Heart left ventricle (tissue), 16 donors: ENCODE measurements at regions of chr1 and their contacts with region 1.

Region 1: DNA sequence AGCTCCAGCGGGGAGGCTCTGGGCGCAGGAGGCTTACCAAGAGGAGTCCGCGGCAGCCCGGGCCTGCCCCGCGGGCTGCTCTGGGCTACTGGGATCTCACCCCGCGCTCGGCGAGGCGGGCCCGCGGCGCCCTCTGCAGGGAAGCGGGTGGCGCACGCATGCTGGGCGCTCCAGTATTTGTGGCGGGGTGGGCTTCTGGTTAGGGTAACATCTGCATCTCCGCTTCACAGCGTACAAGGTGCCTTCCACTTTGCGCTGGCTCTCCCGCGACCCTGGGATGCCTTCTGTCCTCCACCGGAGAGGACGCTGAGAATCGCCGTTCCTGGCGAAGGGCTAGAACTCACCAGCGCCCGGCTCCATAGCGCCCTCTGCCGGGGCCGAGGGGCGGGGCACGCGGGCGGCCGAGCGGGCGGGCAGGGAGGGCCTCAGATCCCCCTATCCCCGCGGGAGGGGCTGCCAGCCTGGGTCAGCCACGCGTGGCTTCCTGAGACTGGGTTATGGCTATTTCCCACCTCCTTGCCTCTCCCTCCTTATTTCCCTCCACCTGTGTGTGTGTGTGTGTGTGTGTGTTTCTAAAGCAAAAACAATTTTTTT is 46.6 kb upstream of the CTBS start:
- DNase-seq: peak; percentile 69 to 90 (median 75)
- ATAC-seq: peak; percentile 75 to 96 (median 92)
- H3K4me3 ChIP-seq: peak overlapping the region; percentile 30 to 78 (median 62)
- H3K27ac ChIP-seq: peak overlapping the region in 8 of 12 donors; percentile 10 to 70 (median 47)
- H3K4me1 ChIP-seq: peaks cover 0 to 22% (median 8%) of the 10 kb centered on the region in 12 donors
- H3K27me3 ChIP-seq: no peaks in the 10 kb centered on the region
- CTCF ChIP-seq: peak in 11 of 12 donors; percentile 92 to 100 (median 97)
- POLR2A ChIP-seq: no peak

Region 2: DNA sequence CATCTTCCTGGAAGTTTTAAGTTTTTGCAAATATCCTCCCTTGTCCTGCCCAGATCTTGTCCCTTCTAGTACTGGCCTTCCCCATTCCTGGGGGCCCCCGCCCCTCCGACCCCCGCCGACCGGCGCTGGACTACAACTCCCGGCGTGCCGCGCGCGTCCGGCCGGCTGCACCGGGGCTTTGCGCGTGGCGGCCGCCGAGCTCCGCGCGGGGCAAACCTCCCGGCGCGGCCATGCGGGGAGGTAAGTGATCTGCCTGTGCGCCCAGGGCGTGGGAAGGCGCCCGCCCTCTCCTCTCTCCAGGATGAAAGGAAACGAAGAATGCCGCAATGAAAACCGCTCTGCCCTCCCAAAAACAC is 322.5 kb before region 1 on chr1:
- intact Hi-C with region 1: no loop called
- DNase-seq: peak; percentile 61 to 83 (median 66)
- ATAC-seq: peak; percentile 72 to 91 (median 82)
- H3K4me3 ChIP-seq: peak overlapping the region; percentile 69 to 93 (median 82)
- H3K27ac ChIP-seq: peak overlapping the region; percentile 78 to 92 (median 86)
- H3K4me1 ChIP-seq: peaks cover 0 to 42% (median 27%) of the 10 kb centered on the region in 12 donors
- H3K27me3 ChIP-seq: no peaks in the 10 kb centered on the region
- CTCF ChIP-seq: no peak
- POLR2A ChIP-seq: peak in 1 of 2 donors; percentile 59

Region 3: DNA sequence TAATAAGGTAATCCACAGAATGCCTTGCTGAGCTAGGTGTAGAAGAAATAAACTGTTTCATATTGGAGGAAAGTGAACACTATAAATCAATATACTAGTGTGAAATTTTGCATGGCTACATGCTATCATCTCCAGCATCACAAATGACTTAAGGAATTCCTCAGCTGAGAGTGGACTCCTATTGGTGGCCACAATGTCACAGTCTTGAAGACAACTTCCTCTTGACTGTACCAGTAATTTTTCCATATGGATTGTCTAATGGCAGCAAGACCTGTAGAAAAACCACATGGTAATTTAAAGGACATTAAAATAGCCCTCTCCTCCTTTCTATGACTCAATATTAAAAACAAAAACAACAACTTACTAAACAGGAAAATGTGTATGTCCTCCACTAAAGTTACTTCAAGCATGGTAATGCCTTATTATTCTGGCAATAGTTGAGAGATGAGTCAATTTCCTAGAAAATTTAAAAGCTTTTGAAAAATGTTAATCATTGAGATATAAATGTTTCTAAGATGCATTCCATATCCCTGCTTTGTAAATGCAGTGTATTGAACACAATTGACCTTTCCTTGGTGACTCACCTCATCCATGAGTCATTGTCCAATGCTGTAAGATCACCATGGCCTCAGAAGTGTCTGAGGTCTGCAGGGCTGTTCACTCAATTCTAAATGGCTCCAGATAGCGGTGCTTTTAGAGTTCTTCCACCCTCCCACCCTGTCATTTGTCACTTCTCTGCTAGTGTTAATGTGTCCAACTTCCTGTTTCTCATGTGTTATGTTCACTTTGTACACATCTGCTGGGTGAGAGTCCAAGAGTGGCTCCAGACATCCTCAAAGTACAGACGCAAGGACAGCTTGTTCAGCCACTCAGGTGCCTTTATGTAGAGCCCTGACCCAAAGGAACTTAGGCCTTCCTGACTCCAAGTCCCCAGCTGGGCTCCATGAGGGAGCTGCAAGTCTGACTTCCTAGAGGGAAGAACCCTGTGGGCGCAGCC is 255.3 kb before region 1 on chr1:
- intact Hi-C with region 1: no loop called
- DNase-seq: no peak
- ATAC-seq: peak in 2 of 4 donors; percentile 72 to 90
- H3K4me3 ChIP-seq: no peak overlapping the region
- H3K27ac ChIP-seq: peak overlapping the region in 2 of 12 donors; percentile 18 to 49
- H3K4me1 ChIP-seq: peaks cover 0 to 12% (median 0%) of the 10 kb centered on the region in 12 donors
- H3K27me3 ChIP-seq: no peaks in the 10 kb centered on the region
- CTCF ChIP-seq: no peak
- POLR2A ChIP-seq: no peak

Region 4: GRCh38 chr1:84442256-84442655 is 178.6 kb before region 1 on chr1:
- intact Hi-C with region 1: loop called in 4 of 10 experiments (anchors 5 to 10 kb)
- DNase-seq: no peak
- ATAC-seq: peak; percentile 51 to 78 (median 74)
- H3K4me3 ChIP-seq: no peak overlapping the region
- H3K27ac ChIP-seq: peak overlapping the region in 1 of 12 donors; percentile 44
- H3K4me1 ChIP-seq: peaks cover 0 to 22% (median 0%) of the 10 kb centered on the region in 12 donors
- H3K27me3 ChIP-seq: peaks cover 0 to 12% (median 0%) of the 10 kb centered on the region in 9 donors
- CTCF ChIP-seq: peak; percentile 7 to 61 (median 46)
- POLR2A ChIP-seq: no peak

Region 5: GRCh38 chr1:84541679-84542078 is 79.1 kb before region 1 on chr1:
- intact Hi-C with region 1: no loop called
- DNase-seq: no peak
- ATAC-seq: no peak
- H3K4me3 ChIP-seq: no peak overlapping the region
- H3K27ac ChIP-seq: no peak overlapping the region
- H3K4me1 ChIP-seq: no peaks in the 10 kb centered on the region
- H3K27me3 ChIP-seq: no peaks in the 10 kb centered on the region
- CTCF ChIP-seq: peak in 6 of 12 donors; percentile 14 to 37 (median 28)
- POLR2A ChIP-seq: no peak

Region 6: GRCh38 chr1:84573967-84574842 is 46.6 kb before region 1 on chr1 and contains the start of gene CTBS:
- intact Hi-C with region 1: loop called in 2 of 10 experiments (anchors 2 to 5 kb)
- DNase-seq: peak; percentile 91 to 95 (median 92)
- ATAC-seq: peak; percentile 95 to 99 (median 98)
- H3K4me3 ChIP-seq: peak within 1 kb of the TSS; percentile 60 to 92 (median 76)
- H3K27ac ChIP-seq: peak within 1 kb of the TSS; percentile 90 to 100 (median 97)
- H3K4me1 ChIP-seq: peaks cover 0 to 27% (median 14%) of the 10 kb centered on the region in 12 donors
- H3K27me3 ChIP-seq: no peaks in the 10 kb centered on the region
- CTCF ChIP-seq: peak in 1 of 12 donors; percentile 13
- POLR2A ChIP-seq: peak in 1 of 2 donors; percentile 81
- total RNA-seq, gene CTBS: 6.6 to 19.9 (median 7.8) TPM

Region 7: DNA sequence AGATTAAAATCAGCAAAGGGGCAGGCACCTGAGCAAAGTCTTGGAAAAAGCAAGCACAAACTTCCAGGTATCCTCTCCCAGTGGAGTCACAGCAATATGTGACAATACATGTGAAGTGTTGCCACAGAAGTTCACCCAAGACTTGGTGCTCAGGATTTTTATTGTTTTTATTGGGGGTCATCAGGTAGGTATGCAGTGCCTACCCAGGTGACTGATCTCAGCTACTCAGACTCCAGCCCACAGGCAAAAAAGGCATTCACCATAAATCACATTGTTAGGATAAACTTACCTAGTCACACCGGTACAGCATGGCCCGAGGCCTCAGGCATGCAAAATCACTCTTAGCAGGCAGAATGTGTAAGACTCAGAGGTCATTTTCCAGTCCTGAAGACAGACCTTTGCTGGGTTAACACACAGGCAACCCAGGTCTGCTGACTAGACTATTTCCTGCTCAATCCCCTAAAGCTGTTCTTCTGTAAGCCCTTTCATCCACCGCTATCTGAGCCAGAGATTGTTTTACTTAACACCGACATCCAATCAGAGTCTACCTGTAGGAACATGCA is 13.9 kb after region 1 on chr1:
- intact Hi-C with region 1: no loop called
- DNase-seq: no peak
- ATAC-seq: no peak
- H3K4me3 ChIP-seq: no peak overlapping the region
- H3K27ac ChIP-seq: no peak overlapping the region
- H3K4me1 ChIP-seq: peaks cover 0 to 9% (median 0%) of the 10 kb centered on the region in 12 donors
- H3K27me3 ChIP-seq: no peaks in the 10 kb centered on the region
- CTCF ChIP-seq: no peak
- POLR2A ChIP-seq: no peak

Region 8: DNA sequence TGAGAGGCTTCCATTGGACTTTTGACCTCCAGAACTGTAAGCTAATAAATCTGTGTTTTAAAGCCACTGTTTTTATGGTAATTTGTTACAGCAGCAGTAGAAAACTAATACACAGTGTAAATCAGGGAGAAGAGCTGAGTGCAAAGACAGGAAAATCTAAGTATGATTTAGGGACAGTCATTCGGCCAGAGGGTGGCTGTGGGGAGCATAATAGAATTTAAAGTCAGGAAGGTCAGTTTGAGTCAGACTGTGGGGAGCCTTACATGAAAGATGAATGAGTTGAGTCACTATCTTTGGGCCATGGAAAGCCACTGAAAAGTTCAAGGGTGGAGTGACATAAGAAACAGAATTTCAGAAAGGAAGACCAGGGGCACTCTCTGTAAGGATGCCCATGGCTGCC is 121.8 kb after region 1 on chr1:
- intact Hi-C with region 1: loop called in 1 of 10 experiments (anchors 10 kb)
- DNase-seq: no peak
- ATAC-seq: no peak
- H3K4me3 ChIP-seq: no peak overlapping the region
- H3K27ac ChIP-seq: no peak overlapping the region
- H3K4me1 ChIP-seq: no peaks in the 10 kb centered on the region
- H3K27me3 ChIP-seq: peaks cover 0 to 4% (median 0%) of the 10 kb centered on the region in 9 donors
- CTCF ChIP-seq: no peak
- POLR2A ChIP-seq: no peak

Region 9: DNA sequence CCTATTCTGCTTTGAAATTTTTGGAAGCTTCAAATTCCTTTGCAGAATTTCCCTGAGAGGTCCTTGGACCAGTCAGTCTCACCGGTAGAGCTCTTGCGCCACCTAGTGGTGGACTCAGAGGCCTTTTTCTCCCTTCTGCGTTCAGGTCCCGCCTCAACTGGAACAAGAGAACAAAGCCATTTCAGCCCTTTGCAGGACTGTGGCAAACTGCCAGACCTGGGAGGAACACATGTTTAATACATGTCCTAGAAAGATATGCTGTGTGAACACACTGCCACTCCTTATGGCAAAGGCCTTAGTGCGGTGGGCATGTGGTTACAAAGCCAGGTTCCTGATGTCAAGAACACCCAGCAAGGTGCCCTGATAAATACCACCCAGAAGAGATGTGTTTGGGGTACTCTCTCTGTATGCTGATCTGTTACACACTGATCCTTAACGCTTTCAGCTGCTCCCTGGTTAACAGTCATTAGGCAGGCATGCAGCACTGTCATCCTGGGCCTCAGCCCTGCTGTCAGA is 151.7 kb after region 1 on chr1:
- intact Hi-C with region 1: loop called in 1 of 10 experiments (anchors 5 kb)
- DNase-seq: peak; percentile 73 to 79 (median 76)
- ATAC-seq: peak; percentile 78 to 91 (median 88)
- H3K4me3 ChIP-seq: no peak overlapping the region
- H3K27ac ChIP-seq: no peak overlapping the region
- H3K4me1 ChIP-seq: peaks cover 0 to 3% (median 0%) of the 10 kb centered on the region in 12 donors
- H3K27me3 ChIP-seq: peaks cover 0 to 8% (median 0%) of the 10 kb centered on the region in 9 donors
- CTCF ChIP-seq: peak; percentile 82 to 96 (median 94)
- POLR2A ChIP-seq: no peak